ENCODE measurements at regions of chr6 and their contacts with region 1.

Region 1: DNA sequence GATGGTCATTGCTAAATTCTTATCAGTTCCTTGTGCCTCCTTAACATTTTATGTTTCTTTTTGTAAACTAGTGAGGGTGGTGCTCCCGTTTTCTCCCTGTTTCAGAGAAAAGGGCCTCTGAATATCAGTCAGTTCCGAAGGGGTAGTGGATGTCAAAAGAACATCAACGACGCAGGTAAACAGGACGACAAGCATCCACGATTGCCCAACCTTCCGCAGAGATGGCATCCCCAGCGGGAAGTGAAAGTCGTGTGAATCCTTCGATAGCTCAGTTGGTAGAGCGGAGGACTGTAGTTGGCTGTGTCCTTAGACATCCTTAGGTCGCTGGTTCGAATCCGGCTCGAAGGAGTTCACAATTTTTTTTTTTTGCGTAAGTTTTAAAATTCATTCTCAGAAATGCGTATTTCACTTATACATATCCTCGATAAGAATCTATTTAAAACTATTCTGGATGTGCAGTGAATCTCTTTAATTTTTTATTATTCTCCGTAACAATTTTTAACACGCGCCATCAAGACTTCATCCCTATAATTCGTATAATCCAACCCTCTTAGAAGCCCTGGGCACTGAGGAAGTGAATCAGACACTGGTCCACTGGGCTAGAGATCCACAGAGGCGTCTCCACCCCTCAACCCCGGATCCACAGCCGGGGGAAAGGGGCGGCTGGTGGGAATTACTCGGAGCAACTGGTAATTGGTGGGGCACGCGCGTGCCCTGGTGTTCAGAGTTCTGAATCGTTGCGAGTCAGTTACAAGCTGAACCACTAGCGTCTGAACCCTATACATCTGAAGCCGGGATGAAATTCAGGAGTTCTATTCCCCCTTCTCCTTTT is 27.9 kb upstream of the ABT1 start:
- DNase-seq: peak; percentile 75 to 95 (median 90)
- ATAC-seq: peak; percentile 79 to 84 (median 80)
- H3K4me3 ChIP-seq: peak overlapping the region; percentile 22 to 68 (median 56)
- H3K27ac ChIP-seq: peak overlapping the region in 9 of 12 donors; percentile 22 to 69 (median 37)
- H3K4me1 ChIP-seq: peaks cover 0 to 22% (median 2%) of the 10 kb centered on the region in 12 donors
- H3K27me3 ChIP-seq: no peaks in the 10 kb centered on the region
- CTCF ChIP-seq: peak in 3 of 12 donors; percentile 8 to 14 (median 11)
- POLR2A ChIP-seq: no peak

Region 2: GRCh38 chr6:26520853-26521599 is 47.8 kb before region 1 on chr6:
- intact Hi-C with region 1: loop called in 2 of 10 experiments (anchors 1 to 5 kb)
- DNase-seq: peak; percentile 87 to 94 (median 91)
- ATAC-seq: peak; percentile 90 to 92 (median 91)
- H3K4me3 ChIP-seq: peak overlapping the region; percentile 28 to 76 (median 62)
- H3K27ac ChIP-seq: peak overlapping the region; percentile 89 to 99 (median 95)
- H3K4me1 ChIP-seq: peaks cover 0 to 39% (median 10%) of the 10 kb centered on the region in 12 donors
- H3K27me3 ChIP-seq: no peaks in the 10 kb centered on the region
- CTCF ChIP-seq: no peak
- POLR2A ChIP-seq: no peak

Region 3: GRCh38 chr6:26537846-26538571 is 30.8 kb before region 1 on chr6 and contains the start of gene HMGN4:
- intact Hi-C with region 1: loop called in 5 of 10 experiments (anchors 2 to 5 kb)
- DNase-seq: peak; percentile 82 to 91 (median 87)
- ATAC-seq: peak; percentile 86 to 90 (median 90)
- H3K4me3 ChIP-seq: peak within 1 kb of the TSS; percentile 58 to 94 (median 76)
- H3K27ac ChIP-seq: peak within 1 kb of the TSS; percentile 75 to 96 (median 92)
- H3K4me1 ChIP-seq: peaks cover 0 to 48% (median 25%) of the 10 kb centered on the region in 12 donors
- H3K27me3 ChIP-seq: no peaks in the 10 kb centered on the region
- CTCF ChIP-seq: peak in 3 of 12 donors; percentile 19 to 40 (median 30)
- POLR2A ChIP-seq: peak in 1 of 2 donors; percentile 56
- total RNA-seq, gene HMGN4: 22.4 to 34.7 (median 32.1) TPM

Region 4: DNA sequence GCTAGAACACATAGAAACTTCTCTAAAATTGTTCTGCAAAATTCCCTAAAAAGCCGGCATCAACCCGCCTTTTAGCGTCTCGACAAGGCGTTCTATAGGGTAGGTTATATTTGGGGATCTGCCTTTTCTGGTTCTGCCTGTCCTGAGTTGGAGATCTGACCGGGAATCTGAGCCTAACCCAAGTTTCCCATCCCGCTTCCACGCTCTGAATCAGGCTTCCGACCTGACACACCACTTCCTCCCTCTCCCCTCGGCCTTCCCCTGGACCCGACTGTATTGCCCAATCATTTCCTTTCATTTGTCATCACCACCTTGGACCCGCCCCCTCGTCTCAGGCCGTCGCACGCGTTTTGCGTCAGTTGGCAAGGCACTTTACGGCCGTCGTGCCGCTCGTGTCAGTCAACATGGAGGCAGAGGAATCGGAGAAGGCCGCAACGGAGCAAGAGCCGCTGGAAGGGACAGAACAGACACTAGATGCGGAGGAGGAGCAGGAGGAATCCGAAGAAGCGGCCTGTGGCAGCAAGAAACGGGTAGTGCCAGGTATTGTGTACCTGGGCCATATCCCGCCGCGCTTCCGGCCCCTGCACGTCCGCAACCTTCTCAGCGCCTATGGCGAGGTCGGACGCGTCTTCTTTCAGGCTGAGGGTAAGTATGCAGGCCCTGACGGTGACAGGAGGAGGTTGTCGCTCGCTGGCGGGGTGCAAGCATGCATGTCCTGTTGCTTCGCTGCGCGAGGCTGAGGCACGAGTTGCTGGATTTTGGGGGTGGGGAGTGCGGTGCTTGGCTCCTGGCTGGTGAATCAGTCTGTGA is 28.0 kb after region 1 on chr6 and contains the start of gene ABT1:
- intact Hi-C with region 1: loop called in 2 of 10 experiments (anchors 1 to 2 kb)
- DNase-seq: peak; percentile 98 to 99 (median 98)
- ATAC-seq: peak; percentile 97 to 100 (median 99)
- H3K4me3 ChIP-seq: peak within 1 kb of the TSS; percentile 67 to 96 (median 87)
- H3K27ac ChIP-seq: peak within 1 kb of the TSS; percentile 79 to 94 (median 88)
- H3K4me1 ChIP-seq: peaks cover 0 to 36% (median 13%) of the 10 kb centered on the region in 12 donors
- H3K27me3 ChIP-seq: peaks cover 3 to 30% (median 19%) of the 10 kb centered on the region in 9 donors
- CTCF ChIP-seq: no peak
- POLR2A ChIP-seq: peak in 1 of 2 donors; percentile 71
- total RNA-seq, gene ABT1: 7.2 to 10.8 (median 8.2) TPM

Measured in heart left ventricle (tissue), 16 donors.